HepG2 (cell line): ENCODE measurements at regions of chr22 and their contacts with region 1.

Region 1: GRCh38 chr22:34696557-34696956 is 369.4 kb upstream of the ISX start:
- DNase-seq: no peak
- ATAC-seq: no peak
- H3K4me3 ChIP-seq: no peak overlapping the region
- H3K27ac ChIP-seq: no peak overlapping the region
- H3K4me1 ChIP-seq: no peaks in the 10 kb centered on the region
- H3K27me3 ChIP-seq: no peaks in the 10 kb centered on the region
- CTCF ChIP-seq: no peak
- EP300 ChIP-seq: no peak
- POLR2A ChIP-seq: no peak
- RAD21 ChIP-seq: no peak

Region 2: GRCh38 chr22:34669001-34669400 is 27.6 kb before region 1 on chr22:
- CTCF ChIA-PET with region 1: no interaction called
- POLR2A ChIA-PET with region 1: no interaction called
- in situ Hi-C with region 1: no loop called
- intact Hi-C with region 1: no loop called
- DNase-seq: no peak
- ATAC-seq: no peak
- H3K4me3 ChIP-seq: no peak overlapping the region
- H3K27ac ChIP-seq: no peak overlapping the region
- H3K4me1 ChIP-seq: no peaks in the 10 kb centered on the region
- H3K27me3 ChIP-seq: no peaks in the 10 kb centered on the region
- CTCF ChIP-seq: no peak
- EP300 ChIP-seq: no peak
- POLR2A ChIP-seq: no peak
- RAD21 ChIP-seq: no peak

Region 3: GRCh38 chr22:34761111-34761510 is 64.6 kb after region 1 on chr22:
- CTCF ChIA-PET with region 1: no interaction called
- POLR2A ChIA-PET with region 1: no interaction called
- in situ Hi-C with region 1: loop called (anchors 10 kb)
- intact Hi-C with region 1: no loop called
- DNase-seq: peak; percentile 30
- ATAC-seq: no peak
- H3K4me3 ChIP-seq: no peak overlapping the region
- H3K27ac ChIP-seq: no peak overlapping the region
- H3K4me1 ChIP-seq: no peaks in the 10 kb centered on the region
- H3K27me3 ChIP-seq: no peaks in the 10 kb centered on the region
- CTCF ChIP-seq: no peak
- EP300 ChIP-seq: no peak
- POLR2A ChIP-seq: no peak
- RAD21 ChIP-seq: no peak